Endothelial cell of umbilical vein (primary cell): ENCODE measurements at regions of chr7 and their contacts with region 1.

Region 1: DNA sequence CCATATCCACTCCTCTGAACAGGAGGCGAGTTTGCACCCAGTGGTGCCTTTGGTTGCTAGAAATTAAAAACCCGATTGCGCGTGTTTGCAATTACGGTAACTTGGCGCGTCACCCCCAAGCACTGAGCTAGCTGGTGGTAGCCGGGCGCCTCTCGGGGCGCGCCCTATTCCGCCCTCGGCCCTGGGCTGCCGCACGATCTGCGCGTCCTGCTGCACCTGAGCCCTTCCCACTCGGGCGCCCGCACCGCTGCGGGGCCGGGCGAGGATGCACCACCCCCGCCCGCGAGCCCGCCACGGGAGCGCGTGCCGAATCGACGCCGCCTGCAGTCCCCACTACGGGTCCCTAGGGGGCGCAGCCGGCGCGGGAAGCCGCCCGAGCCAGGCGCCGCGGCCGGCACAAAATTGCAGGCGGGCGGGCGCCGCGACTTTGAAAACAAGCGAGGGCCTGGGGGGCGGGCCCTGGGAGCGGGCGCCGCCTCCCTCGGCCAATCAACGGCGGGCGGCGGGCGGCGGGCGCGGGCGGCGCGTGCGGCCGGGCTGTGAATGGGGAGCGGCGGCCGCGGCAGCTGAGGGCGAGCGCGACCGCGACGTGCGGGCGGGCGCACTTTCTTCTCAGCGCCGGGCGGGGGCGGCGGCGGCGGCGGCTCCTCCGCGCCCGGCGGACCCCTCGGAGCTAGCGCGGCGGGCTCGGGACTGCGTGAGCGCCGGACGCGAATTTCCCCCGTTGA is at the start of gene SDK1:
- DNase-seq: peak; percentile 86
- H3K4me3 ChIP-seq: peak within 1 kb of the TSS in 2 of 3 experiments; percentile 41 to 43
- H3K27ac ChIP-seq: no peak within 1 kb of the TSS
- H3K4me1 ChIP-seq: peaks cover 6% of the 10 kb centered on the region
- H3K27me3 ChIP-seq: peaks cover 25 to 33% of the 10 kb centered on the region in 2 experiments
- CTCF ChIP-seq: peak; percentile 85 to 88
- POLR2A ChIP-seq: no peak
- total RNA-seq, gene SDK1: 2.4 and 3.9 TPM in 2 replicates

Region 2: DNA sequence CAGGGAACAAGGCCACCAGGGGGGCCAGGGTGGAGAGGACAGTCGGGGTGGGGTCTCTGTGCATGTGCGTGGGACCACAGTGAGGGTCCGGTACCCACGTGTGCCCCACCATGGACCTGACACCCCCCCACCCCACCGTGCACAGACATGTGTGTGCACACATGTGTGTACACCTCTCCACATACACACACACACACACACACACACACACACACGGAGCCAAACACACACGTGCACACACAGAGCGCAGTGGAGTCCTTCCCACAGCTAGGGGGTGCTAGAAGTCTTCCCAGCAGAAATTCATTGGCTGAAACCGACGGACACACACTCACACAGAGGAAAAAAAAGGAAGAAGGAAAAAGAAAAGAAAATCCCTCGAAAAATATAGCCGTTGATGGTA is 413.9 kb before region 1 on chr7:
- CTCF ChIA-PET with region 1: no interaction called
- POLR2A ChIA-PET with region 1: no interaction called
- dilution Hi-C with region 1: no loop called
- intact Hi-C with region 1: loop called (anchors 5 kb)
- DNase-seq: peak; percentile 62
- H3K4me3 ChIP-seq: no peak overlapping the region
- H3K27ac ChIP-seq: no peak overlapping the region
- H3K4me1 ChIP-seq: no peaks in the 10 kb centered on the region
- H3K27me3 ChIP-seq: no peaks in the 10 kb centered on the region
- CTCF ChIP-seq: peak; percentile 84 to 90
- POLR2A ChIP-seq: no peak

Region 3: GRCh38 chr7:3673524-3673923 is 372.7 kb after region 1 on chr7:
- CTCF ChIA-PET with region 1: interaction called, 25 read pairs
- POLR2A ChIA-PET with region 1: no interaction called
- dilution Hi-C with region 1: no loop called
- intact Hi-C with region 1: loop called (anchors 1 kb)
- DNase-seq: peak; percentile 25
- H3K4me3 ChIP-seq: no peak overlapping the region
- H3K27ac ChIP-seq: no peak overlapping the region
- H3K4me1 ChIP-seq: no peaks in the 10 kb centered on the region
- H3K27me3 ChIP-seq: no peaks in the 10 kb centered on the region
- CTCF ChIP-seq: peak; percentile 37 to 54
- POLR2A ChIP-seq: no peak

Region 4: DNA sequence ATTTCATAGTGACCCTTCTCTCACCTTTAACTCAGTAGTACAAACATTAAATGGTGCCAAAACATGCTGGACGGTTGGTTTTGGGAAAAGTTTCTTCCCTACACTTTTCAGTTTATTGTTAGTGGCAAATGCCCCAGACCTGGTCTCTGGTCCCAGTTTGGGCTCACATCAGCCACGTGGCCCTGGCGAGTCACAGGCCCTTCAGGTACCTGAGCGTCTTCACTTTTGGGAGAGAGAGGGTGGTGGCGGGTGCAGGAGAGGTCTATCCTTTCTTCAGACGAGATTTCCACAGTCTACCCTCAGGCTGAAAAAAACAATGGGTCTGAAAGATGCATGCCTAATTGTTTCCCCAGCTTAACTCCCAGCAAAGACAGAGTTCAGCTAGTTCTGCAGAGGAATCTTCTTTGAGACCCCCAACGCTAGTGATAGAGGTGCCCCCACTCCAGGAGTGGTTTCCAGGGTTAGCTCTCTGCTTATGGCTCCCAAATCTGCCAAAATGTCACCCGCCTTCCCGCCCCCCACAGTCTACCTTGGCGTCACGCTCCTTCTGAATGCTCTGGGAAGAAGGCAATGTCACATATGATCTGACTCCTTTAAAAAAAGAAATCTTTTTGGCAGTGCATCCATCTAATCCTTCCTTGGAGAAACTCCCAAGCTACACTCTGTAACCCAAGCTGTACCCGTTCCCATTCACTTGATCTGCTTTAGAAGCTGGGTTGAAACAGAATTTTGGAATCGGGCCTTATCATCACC is 996.5 kb after region 1 on chr7:
- CTCF ChIA-PET with region 1: no interaction called
- POLR2A ChIA-PET with region 1: no interaction called
- dilution Hi-C with region 1: no loop called
- intact Hi-C with region 1: no loop called
- DNase-seq: no peak
- H3K4me3 ChIP-seq: no peak overlapping the region
- H3K27ac ChIP-seq: no peak overlapping the region
- H3K4me1 ChIP-seq: no peaks in the 10 kb centered on the region
- H3K27me3 ChIP-seq: no peaks in the 10 kb centered on the region
- CTCF ChIP-seq: no peak
- POLR2A ChIP-seq: no peak

Region 5: DNA sequence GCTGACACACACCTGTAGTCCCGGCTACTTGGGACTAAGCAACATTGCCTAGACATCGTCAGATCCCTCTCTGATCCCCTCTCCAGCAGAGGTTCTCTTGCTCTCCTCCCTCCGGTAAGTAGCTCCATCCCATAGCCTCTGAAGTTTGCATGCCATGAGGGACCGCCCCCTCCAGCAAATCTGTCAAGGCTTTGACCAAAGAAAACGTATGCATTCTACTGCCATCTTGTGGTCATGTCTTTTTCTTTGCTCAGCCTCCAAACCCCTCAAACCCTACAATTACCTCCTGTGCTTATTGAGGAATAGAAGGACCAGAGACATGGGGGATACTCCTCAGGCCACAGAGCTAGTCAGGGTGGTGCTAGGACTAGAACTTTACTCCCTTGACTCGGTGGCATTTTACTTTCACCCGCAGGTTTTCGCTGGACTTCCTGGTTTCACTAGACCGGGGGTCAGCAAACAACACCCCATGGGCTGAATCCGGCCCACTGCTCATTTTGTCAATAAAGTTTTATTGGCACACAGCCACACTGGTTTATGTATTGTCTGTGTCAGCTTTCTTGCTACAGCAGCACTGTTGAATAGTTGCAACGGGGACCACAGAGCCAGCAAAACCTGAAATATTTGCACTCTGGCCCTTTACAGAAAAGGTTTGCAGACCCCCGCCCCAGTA is 1178.7 kb after region 1 on chr7:
- CTCF ChIA-PET with region 1: no interaction called
- POLR2A ChIA-PET with region 1: no interaction called
- dilution Hi-C with region 1: no loop called
- intact Hi-C with region 1: loop called (anchors 10 kb)
- DNase-seq: peak; percentile 41
- H3K4me3 ChIP-seq: no peak overlapping the region
- H3K27ac ChIP-seq: no peak overlapping the region
- H3K4me1 ChIP-seq: no peaks in the 10 kb centered on the region
- H3K27me3 ChIP-seq: no peaks in the 10 kb centered on the region
- CTCF ChIP-seq: peak; percentile 24 to 42
- POLR2A ChIP-seq: no peak